ENCODE measurements at regions of chr9 and their contacts with region 1.

Region 1: GRCh38 chr9:34403554-34404380 is 27.1 kb upstream of the MYORG start:
- DNase-seq: peak; percentile 69
- ATAC-seq: peak; percentile 45
- H3K4me3 Mint-ChIP-seq: no peak overlapping the region
- H3K27ac Mint-ChIP-seq: no peak overlapping the region
- H3K4me1 Mint-ChIP-seq: no peaks in the 10 kb centered on the region
- H3K27me3 Mint-ChIP-seq: no peaks in the 10 kb centered on the region
- CTCF ChIP-seq: peak; percentile 100

Region 2: GRCh38 chr9:34392511-34392910 is 11.3 kb before region 1 on chr9:
- CTCF ChIA-PET with region 1: interaction called, 31 read pairs
- POLR2A ChIA-PET with region 1: no interaction called
- intact Hi-C with region 1: no loop called
- DNase-seq: no peak
- ATAC-seq: no peak
- H3K4me3 Mint-ChIP-seq: no peak overlapping the region
- H3K27ac Mint-ChIP-seq: no peak overlapping the region
- H3K4me1 Mint-ChIP-seq: no peaks in the 10 kb centered on the region
- H3K27me3 Mint-ChIP-seq: peaks cover 1% of the 10 kb centered on the region
- CTCF ChIP-seq: no peak

Region 3: GRCh38 chr9:34437006-34437925 is 33.5 kb after region 1 on chr9:
- CTCF ChIA-PET with region 1: interaction called, 17 read pairs
- POLR2A ChIA-PET with region 1: no interaction called
- intact Hi-C with region 1: no loop called
- DNase-seq: peak; percentile 81
- ATAC-seq: peak; percentile 99
- H3K4me3 Mint-ChIP-seq: no peak overlapping the region
- H3K27ac Mint-ChIP-seq: no peak overlapping the region
- H3K4me1 Mint-ChIP-seq: peaks cover 7% of the 10 kb centered on the region
- H3K27me3 Mint-ChIP-seq: no peaks in the 10 kb centered on the region
- CTCF ChIP-seq: peak; percentile 82

Region 4: GRCh38 chr9:34500623-34501267 is 97.0 kb after region 1 on chr9:
- CTCF ChIA-PET with region 1: interaction called, 90 read pairs
- POLR2A ChIA-PET with region 1: no interaction called
- intact Hi-C with region 1: no loop called
- DNase-seq: peak; percentile 84
- ATAC-seq: peak; percentile 95
- H3K4me3 Mint-ChIP-seq: no peak overlapping the region
- H3K27ac Mint-ChIP-seq: no peak overlapping the region
- H3K4me1 Mint-ChIP-seq: peaks cover 3% of the 10 kb centered on the region
- H3K27me3 Mint-ChIP-seq: peaks cover 6% of the 10 kb centered on the region
- CTCF ChIP-seq: peak; percentile 97

Region 5: DNA sequence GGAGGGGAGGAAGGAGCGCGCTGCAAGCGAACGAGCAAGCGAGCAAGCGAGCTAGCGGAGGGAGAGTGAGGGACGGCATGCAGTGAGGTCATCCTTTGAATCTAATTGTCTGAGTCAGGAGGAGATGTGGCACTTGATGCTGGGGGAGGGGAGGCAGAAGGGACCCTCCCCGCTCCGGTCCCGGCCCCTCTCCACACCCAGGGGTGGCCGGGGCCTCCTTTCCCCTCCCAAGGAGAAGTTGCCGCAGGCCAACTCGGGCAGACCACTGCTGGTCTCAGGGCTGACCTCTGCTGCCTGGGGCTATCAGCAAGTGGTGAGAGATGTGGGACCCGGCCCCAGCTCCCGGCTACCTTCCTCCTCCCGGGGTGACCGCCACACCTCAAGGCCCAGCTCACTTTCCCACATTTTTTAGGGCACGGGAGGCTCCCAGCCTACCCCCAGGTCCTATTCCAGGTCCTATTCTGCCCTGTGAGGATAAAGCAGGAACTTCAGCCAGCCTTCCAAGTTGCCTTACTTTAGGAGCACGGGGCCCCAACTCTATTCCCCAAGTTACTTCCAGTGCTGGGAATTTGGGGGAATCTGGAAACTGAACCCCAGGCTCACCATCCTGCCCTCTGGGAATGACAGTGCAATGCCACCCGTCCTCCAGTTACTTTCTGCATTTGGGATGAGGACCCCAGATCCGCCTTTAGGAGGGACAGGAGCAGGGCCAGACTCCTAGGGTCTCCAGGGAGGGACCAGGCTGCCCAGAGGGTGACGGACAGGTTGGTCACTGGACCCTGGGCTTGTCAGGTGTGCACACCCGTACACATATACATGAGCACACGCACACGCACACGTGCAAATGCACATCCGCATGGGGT is 174.7 kb after region 1 on chr9:
- CTCF ChIA-PET with region 1: interaction called, 10 read pairs
- POLR2A ChIA-PET with region 1: no interaction called
- intact Hi-C with region 1: no loop called
- DNase-seq: peak; percentile 30
- ATAC-seq: peak; percentile 74
- H3K4me3 Mint-ChIP-seq: no peak overlapping the region
- H3K27ac Mint-ChIP-seq: no peak overlapping the region
- H3K4me1 Mint-ChIP-seq: peaks cover 6% of the 10 kb centered on the region
- H3K27me3 Mint-ChIP-seq: peaks cover 48% of the 10 kb centered on the region
- CTCF ChIP-seq: no peak

Measured in activated CD8-positive, alpha-beta T cell treated with anti-CD3 and anti-CD28 coated beads for 36 hours (primary cell).